Psoas muscle (tissue), 8 donors: ENCODE measurements at regions of chr4 and their contacts with region 1.

Region 1: GRCh38 chr4:122930862-122931261 is 8.5 kb upstream of the NUDT6 start:
- DNase-seq: no peak
- ATAC-seq: no peak
- H3K4me3 ChIP-seq: no peak overlapping the region
- H3K27ac ChIP-seq: no peak overlapping the region
- H3K4me1 ChIP-seq: peaks cover 4% of the 10 kb centered on the region
- H3K27me3 ChIP-seq: no peaks in the 10 kb centered on the region
- CTCF ChIP-seq: peak; percentile 67

Region 2: GRCh38 chr4:122602277-122603142 is 328.4 kb before region 1 on chr4:
- intact Hi-C with region 1: loop called in 1 of 2 experiments (anchors 2 kb)
- DNase-seq: no peak
- ATAC-seq: peak in 3 of 4 donors; percentile 60 to 94 (median 75)
- H3K4me3 ChIP-seq: no peak overlapping the region
- H3K27ac ChIP-seq: no peak overlapping the region
- H3K4me1 ChIP-seq: no peaks in the 10 kb centered on the region
- H3K27me3 ChIP-seq: peaks cover 0 to 6% (median 0%) of the 10 kb centered on the region in 3 donors
- CTCF ChIP-seq: peak; percentile 55

Region 3: GRCh38 chr4:122758033-122758432 is 172.8 kb before region 1 on chr4:
- intact Hi-C with region 1: loop called (anchors 1 to 5 kb)
- DNase-seq: no peak
- ATAC-seq: peak in 2 of 4 donors; percentile 40 to 74
- H3K4me3 ChIP-seq: no peak overlapping the region
- H3K27ac ChIP-seq: no peak overlapping the region
- H3K4me1 ChIP-seq: no peaks in the 10 kb centered on the region
- H3K27me3 ChIP-seq: no peaks in the 10 kb centered on the region
- CTCF ChIP-seq: peak; percentile 79

Region 4: DNA sequence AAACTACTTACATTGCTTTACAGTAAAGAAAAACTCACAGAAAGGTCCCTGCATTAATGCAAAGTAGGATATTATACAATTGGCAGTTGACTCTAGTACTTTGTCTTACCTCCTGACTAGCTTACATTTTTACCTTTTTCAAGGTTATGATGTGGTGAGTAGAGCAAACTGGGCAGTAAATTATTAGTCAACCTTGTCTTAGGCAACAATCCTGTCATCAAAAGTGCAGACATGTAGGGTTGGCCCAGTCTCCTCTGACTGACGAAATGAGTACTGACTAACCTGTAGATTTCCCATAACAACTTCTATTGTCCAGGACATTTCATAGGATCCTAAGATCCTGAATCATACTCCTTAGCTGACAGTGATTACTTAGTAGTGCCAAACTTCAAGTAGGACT is 133.5 kb after region 1 on chr4:
- intact Hi-C with region 1: no loop called
- DNase-seq: no peak
- ATAC-seq: peak in 1 of 4 donors; percentile 60
- H3K4me3 ChIP-seq: no peak overlapping the region
- H3K27ac ChIP-seq: no peak overlapping the region
- H3K4me1 ChIP-seq: no peaks in the 10 kb centered on the region
- H3K27me3 ChIP-seq: no peaks in the 10 kb centered on the region
- CTCF ChIP-seq: no peak